CD8-positive, alpha-beta memory T cell (primary cell): ENCODE measurements at regions of chr16 and their contacts with region 1.

Region 1: DNA sequence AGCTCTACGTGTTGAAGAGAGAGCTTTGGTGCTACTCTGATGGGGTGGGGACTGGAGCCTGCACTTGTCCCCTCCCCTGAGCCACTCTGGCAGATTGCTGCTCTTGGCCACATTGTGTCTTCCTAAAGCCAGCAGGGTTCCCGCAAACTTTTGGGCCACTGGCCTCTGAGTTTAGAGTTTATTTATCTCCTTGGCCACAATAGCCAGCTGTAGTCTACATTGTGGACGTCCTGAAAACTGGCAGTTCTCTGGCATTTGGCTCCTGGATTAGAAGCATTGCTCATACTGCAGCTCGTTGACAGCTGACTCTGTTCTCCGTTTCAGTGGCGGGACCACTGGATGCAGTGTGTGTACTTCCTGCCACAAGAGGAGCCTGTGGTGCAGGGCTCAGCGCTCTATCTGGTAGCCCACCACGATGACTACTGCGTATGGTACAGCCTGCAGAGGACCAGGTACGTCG is 34.6 kb downstream of the PRMT7 start:
- DNase-seq: no peak
- H3K4me3 ChIP-seq: no peak overlapping the region
- H3K4me3 Mint-ChIP-seq: no peak overlapping the region
- H3K27ac ChIP-seq: no peak overlapping the region
- H3K27ac Mint-ChIP-seq: peak overlapping the region in 1 of 8 donors; percentile 46
- H3K4me1 ChIP-seq: no peaks in the 10 kb centered on the region
- H3K4me1 Mint-ChIP-seq: peaks cover 0 to 15% (median 3%) of the 10 kb centered on the region in 3 donors
- H3K27me3 ChIP-seq: no peaks in the 10 kb centered on the region
- H3K27me3 Mint-ChIP-seq: no peaks in the 10 kb centered on the region

Region 2: DNA sequence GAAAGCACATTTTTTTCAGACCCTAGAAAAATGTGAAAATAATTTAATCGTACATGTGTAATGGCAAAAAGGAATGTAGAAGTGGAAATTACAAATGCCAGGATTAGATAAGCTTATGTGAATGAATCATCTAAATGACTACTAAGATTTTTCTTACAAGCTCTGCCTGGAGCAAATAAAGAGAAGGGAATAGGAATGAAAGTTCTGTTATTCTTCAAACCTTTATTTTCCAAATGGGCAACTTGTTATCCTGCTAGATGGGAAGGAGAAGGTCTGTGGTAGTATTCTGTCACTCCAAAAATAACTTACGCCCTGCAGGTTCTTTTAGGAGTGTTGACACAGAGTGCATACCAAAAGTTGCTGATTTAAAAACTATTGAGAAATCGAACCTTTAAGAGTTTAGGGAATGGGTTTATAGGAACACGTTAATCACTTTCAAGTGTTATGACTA is 773.4 kb before region 1 on chr16:
- CTCF ChIA-PET with region 1: no interaction called
- POLR2A ChIA-PET with region 1: interaction called, 10 read pairs
- DNase-seq: no peak
- H3K4me3 ChIP-seq: no peak overlapping the region
- H3K4me3 Mint-ChIP-seq: no peak overlapping the region
- H3K27ac ChIP-seq: no peak overlapping the region
- H3K27ac Mint-ChIP-seq: peak overlapping the region in 2 of 8 donors; percentile 33 to 39
- H3K4me1 ChIP-seq: peaks cover 6% of the 10 kb centered on the region
- H3K4me1 Mint-ChIP-seq: peaks cover 19 to 56% (median 25%) of the 10 kb centered on the region in 3 donors
- H3K27me3 ChIP-seq: no peaks in the 10 kb centered on the region
- H3K27me3 Mint-ChIP-seq: no peaks in the 10 kb centered on the region

Region 3: DNA sequence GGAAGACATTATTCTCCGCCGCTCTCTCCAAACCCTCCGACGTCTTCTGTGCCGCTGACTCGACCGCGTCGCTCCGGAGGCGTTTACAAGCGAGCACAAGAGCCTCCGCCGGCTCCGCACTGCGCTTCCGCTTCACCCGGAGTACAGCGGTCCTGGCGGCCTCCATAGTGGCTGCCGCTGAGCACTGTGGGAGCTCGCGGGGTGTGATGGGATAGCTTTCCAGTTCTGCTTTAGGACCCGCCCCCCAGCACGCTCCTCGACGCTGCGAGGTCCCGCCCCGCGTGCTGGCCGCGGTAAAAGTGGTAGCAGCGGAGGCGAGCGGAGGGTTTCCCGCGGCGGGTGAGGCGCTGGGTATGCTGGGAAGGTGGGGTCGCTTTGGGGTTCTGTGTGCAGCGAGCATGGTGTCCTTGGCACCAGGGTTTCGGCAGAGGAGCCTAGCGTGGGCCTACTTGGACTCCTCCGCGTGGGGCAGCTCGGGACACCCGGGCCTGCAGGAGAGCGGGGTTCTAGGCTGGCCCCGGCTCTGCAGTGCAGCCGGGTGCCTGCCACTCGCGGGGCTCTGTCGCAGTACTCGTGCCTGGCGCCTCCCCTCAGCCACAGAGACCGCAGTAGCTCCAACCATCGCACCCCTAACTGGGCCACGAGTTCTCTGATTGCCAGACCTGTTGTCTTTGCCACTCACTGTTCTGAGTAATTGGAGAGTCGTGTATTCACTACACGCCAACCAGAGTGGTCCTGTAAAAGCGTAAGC is 34.4 kb before region 1 on chr16 and contains the starts of genes PRMT7 and SLC7A6OS:
- CTCF ChIA-PET with region 1: no interaction called
- POLR2A ChIA-PET with region 1: no interaction called
- DNase-seq: peak; percentile 90 to 94 (median 92)
- H3K4me3 ChIP-seq: peak within 1 kb of the TSS; percentile 95
- H3K4me3 Mint-ChIP-seq: peak within 1 kb of the TSS; percentile 90 to 99 (median 98)
- H3K27ac ChIP-seq: peak within 1 kb of the TSS; percentile 83
- H3K27ac Mint-ChIP-seq: peak within 1 kb of the TSS; percentile 92 to 98 (median 98)
- H3K4me1 ChIP-seq: peaks cover 43% of the 10 kb centered on the region
- H3K4me1 Mint-ChIP-seq: peaks cover 44 to 63% (median 53%) of the 10 kb centered on the region in 3 donors
- H3K27me3 ChIP-seq: no peaks in the 10 kb centered on the region
- H3K27me3 Mint-ChIP-seq: no peaks in the 10 kb centered on the region
- total RNA-seq, gene PRMT7: 61.1 to 67.5 TPM
- total RNA-seq, gene SLC7A6OS: 21.8 to 25.5 TPM